Ascending aorta (tissue), 2 donors: ENCODE measurements at regions of chr1 and their contacts with region 1.

Region 1: DNA sequence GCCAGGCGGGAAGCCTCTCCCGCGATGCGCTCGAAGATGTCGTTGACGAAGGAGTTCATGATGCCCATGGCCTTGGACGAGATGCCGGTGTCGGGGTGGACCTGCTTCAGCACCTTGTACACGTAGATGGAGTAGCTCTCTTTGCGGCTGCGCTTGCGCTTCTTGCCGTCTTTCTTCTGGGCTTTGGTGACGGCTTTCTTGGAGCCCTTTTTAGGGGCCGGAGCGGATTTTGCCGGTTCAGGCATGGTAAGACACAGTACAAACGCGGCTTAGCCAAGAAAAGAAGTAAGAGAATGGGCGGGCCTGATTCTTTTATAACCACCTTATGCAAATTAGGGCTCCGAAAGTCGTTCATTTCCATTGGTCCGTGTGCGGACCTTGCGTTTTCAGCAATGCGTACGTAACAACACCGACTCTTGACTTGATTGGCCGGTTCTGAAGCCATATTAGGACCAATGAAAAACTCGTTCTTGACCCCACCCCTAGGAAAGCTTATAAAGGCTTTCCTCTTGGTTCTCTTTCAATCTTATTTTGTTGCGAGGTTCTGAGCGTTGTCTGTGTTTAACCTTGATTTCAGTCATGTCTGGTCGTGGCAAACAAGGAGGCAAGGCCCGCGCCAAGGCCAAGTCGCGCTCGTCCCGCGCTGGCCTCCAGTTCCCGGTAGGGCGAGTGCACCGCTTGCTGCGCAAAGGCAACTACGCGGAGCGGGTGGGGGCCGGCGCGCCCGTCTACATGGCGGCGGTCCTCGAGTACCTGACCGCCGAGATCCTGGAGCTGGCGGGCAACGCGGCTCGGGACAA is 12.8 kb upstream of the BOLA1 start:
- DNase-seq: peak; percentile 82 to 96
- H3K4me3 ChIP-seq: peak overlapping the region; percentile 77 to 81
- H3K27ac ChIP-seq: peak overlapping the region; percentile 97 to 100
- H3K4me1 ChIP-seq: peaks cover 7 to 17% of the 10 kb centered on the region in 2 donors
- H3K27me3 ChIP-seq: no peaks in the 10 kb centered on the region
- CTCF ChIP-seq: no peak

Region 2: DNA sequence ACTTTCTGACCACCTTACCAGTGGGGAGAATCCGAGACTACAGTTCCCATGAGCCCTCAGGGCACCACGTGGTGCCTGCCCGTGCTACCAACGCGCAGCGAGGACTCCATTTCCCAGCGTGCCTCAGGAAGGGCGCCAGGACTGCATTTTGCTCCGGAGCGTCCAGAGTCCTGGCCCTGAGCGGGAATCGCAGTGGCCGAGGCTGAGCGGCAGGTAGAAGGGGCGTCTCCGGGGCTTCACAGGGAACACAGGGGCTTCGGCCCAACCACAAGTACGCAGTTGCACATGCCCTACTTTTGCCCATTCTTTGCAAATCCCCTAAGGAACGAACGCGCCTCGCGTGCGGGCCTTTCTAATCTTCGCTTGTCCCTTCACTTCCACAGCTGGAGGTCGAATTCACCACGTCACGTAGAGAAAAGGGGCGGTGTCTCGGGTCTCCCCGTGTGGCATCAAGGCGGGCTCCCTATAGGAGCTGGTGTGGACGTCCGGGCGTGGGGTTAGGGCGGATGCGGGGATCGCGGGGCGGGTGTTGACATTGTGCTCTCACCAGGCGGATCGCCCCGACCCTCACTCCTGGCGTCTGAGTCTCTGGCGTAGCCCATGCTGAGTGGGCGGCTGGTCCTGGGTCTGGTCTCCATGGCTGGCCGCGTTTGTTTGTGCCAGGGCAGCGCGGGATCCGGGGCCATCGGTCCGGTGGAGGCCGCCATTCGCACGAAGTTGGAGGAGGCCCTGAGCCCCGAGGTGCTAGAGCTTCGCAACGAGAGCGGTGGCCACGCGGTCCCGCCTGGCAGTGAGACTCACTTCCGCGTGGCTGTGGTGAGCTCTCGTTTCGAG is 13.1 kb after region 1 on chr1 and contains the start of gene BOLA1:
- intact Hi-C with region 1: loop called (anchors 1 kb)
- DNase-seq: peak; percentile 75 to 96
- H3K4me3 ChIP-seq: peak within 1 kb of the TSS; percentile 66 to 70
- H3K27ac ChIP-seq: peak within 1 kb of the TSS; percentile 87 to 90
- H3K4me1 ChIP-seq: peaks cover 0 to 5% of the 10 kb centered on the region in 2 donors
- H3K27me3 ChIP-seq: no peaks in the 10 kb centered on the region
- CTCF ChIP-seq: no peak
- total RNA-seq, gene BOLA1: 36.7 TPM

Region 3: DNA sequence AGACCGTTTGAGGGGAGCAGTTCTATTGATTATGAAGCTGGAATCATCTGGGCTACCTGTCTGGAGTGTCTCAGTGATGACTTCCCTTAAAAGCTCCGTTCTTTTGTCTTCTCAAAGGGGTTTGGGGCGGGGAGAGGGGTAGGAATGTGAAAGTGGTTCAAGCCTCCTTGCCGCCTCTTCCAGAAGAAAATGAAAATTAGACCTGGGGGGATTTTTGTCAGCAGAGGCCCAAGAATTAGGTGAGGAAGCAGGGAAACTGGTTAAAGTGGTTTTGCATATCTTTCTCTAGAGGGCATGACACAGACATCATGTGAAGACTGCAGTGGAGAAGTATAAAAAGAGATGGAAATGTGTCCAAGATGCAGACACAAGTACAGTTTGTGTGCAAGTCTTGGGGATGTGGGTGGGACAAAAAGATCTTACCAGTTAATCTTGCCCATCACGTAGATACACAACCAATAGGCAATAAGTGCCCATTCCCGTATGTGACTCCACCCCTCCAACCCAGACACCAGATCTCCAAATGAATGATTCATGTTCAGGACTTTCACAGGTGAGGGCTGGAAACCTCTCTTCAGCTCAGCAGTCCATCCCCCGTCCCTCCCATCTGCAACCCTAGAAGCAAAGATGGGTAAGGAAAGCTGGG is 50.6 kb after region 1 on chr1:
- intact Hi-C with region 1: loop called (anchors 1 kb)
- DNase-seq: no peak
- H3K4me3 ChIP-seq: peak overlapping the region; percentile 74 to 93
- H3K27ac ChIP-seq: peak overlapping the region; percentile 82 to 96
- H3K4me1 ChIP-seq: peaks cover 5 to 27% of the 10 kb centered on the region in 2 donors
- H3K27me3 ChIP-seq: no peaks in the 10 kb centered on the region
- CTCF ChIP-seq: peak in 1 of 3 experiments; percentile 20